ENCODE measurements at regions of chr4 and their contacts with region 1.

Region 1: DNA sequence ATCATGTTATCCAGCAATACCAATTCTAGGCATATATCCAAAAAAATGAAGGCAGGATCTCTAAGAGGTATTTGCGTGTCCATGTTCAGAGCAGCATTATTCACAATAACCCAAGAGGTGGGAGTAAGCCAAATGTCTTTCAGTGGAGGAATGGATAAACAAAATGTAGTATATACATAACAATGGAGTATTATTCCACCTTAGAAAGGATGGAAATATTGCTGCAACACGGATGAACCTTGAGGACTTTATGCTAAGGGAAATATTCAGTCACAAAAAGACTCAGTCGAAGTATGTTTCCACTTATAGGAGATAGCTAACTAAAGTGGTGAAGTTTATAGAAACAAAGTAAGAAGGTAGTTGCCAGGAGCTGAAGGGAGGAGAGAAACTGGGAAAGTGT is 74.3 kb downstream of the LARP1B start:
- DNase-seq: no peak
- ATAC-seq: no peak
- H3K4me3 ChIP-seq: no peak overlapping the region
- H3K27ac ChIP-seq: no peak overlapping the region
- H3K4me1 ChIP-seq: no peaks in the 10 kb centered on the region
- H3K27me3 ChIP-seq: no peaks in the 10 kb centered on the region
- CTCF ChIP-seq: no peak
- POLR2A ChIP-seq: no peak
- RAD21 ChIP-seq: no peak

Region 2: DNA sequence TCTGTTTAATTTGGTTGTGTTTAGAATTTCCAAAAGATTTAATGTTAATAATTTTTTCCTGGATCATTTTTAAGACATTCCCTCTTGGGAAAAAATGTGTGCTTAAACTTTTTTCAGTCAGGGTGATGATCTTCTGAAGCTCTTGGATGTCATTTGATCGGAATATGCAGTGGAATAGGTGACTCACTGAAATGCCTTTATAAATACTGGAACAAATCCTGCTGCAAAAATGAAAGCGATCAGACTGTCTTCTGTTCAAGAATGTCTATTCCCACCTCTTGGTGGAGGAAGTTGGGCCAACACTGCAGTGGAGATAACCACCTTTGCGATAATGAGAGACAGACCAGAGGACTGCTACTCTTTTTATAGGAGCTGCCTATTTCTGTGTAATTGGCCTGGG is 27.6 kb before region 1 on chr4:
- CTCF ChIA-PET with region 1: no interaction called
- POLR2A ChIA-PET with region 1: no interaction called
- dilution Hi-C with region 1: no loop called
- in situ Hi-C with region 1: no loop called
- intact Hi-C with region 1: loop called (anchors 5 kb)
- DNase-seq: peak; percentile 83
- ATAC-seq: peak; percentile 62; the same call in 1 of the 2 replicates
- H3K4me3 ChIP-seq: no peak overlapping the region
- H3K27ac ChIP-seq: no peak overlapping the region
- H3K4me1 ChIP-seq: no peaks in the 10 kb centered on the region
- H3K27me3 ChIP-seq: no peaks in the 10 kb centered on the region
- CTCF ChIP-seq: no peak
- POLR2A ChIP-seq: no peak
- RAD21 ChIP-seq: no peak

Region 3: GRCh38 chr4:128123036-128123435 is 12.4 kb before region 1 on chr4:
- CTCF ChIA-PET with region 1: no interaction called
- POLR2A ChIA-PET with region 1: no interaction called
- dilution Hi-C with region 1: no loop called
- in situ Hi-C with region 1: no loop called
- intact Hi-C with region 1: no loop called
- DNase-seq: no peak
- ATAC-seq: no peak
- H3K4me3 ChIP-seq: no peak overlapping the region
- H3K27ac ChIP-seq: no peak overlapping the region
- H3K4me1 ChIP-seq: no peaks in the 10 kb centered on the region
- H3K27me3 ChIP-seq: no peaks in the 10 kb centered on the region
- CTCF ChIP-seq: no peak
- POLR2A ChIP-seq: no peak
- RAD21 ChIP-seq: no peak

Region 4: DNA sequence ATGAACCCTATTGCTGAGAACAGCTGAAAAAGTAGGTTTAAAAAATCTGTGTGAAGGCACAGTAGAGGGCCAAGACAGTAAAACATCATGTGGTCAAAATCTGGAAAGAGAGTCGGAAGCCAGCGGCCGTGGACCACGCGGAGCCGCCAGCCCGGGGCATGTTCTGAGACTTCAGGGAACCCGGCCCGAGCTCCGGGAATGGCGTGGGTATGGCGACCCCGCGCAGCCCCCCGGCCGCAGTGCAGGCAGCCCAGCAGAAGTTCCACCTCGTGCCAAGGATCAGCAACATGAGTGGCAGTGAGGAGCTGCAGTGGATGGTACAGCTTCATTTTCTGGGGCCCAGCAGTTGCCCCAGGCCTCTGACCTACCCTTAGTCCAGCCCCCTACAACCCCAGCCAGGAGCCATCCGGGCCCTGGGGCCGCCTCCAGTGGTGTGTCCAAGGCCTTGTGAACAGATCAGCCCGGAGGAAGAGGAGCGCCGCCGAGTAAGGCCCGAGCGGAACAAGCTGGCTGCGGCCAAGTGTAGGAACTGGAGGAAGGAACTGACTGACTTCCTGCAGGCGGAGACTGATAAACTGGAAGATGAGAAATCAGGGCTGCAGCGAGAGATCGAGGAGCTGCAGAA is 20.0 kb after region 1 on chr4:
- CTCF ChIA-PET with region 1: no interaction called
- POLR2A ChIA-PET with region 1: no interaction called
- dilution Hi-C with region 1: no loop called
- in situ Hi-C with region 1: no loop called
- intact Hi-C with region 1: no loop called
- DNase-seq: no peak
- ATAC-seq: no peak
- H3K4me3 ChIP-seq: no peak overlapping the region
- H3K27ac ChIP-seq: no peak overlapping the region
- H3K4me1 ChIP-seq: peaks cover 6% of the 10 kb centered on the region
- H3K27me3 ChIP-seq: no peaks in the 10 kb centered on the region
- CTCF ChIP-seq: no peak
- POLR2A ChIP-seq: no peak
- RAD21 ChIP-seq: no peak

Measured in IMR-90 (cell line).